Activated CD4-positive, alpha-beta T cell treated with anti-CD3 and anti-CD28 coated beads for 36 hours (primary cell): ENCODE measurements at regions of chr1 and their contacts with region 1.

Region 1: DNA sequence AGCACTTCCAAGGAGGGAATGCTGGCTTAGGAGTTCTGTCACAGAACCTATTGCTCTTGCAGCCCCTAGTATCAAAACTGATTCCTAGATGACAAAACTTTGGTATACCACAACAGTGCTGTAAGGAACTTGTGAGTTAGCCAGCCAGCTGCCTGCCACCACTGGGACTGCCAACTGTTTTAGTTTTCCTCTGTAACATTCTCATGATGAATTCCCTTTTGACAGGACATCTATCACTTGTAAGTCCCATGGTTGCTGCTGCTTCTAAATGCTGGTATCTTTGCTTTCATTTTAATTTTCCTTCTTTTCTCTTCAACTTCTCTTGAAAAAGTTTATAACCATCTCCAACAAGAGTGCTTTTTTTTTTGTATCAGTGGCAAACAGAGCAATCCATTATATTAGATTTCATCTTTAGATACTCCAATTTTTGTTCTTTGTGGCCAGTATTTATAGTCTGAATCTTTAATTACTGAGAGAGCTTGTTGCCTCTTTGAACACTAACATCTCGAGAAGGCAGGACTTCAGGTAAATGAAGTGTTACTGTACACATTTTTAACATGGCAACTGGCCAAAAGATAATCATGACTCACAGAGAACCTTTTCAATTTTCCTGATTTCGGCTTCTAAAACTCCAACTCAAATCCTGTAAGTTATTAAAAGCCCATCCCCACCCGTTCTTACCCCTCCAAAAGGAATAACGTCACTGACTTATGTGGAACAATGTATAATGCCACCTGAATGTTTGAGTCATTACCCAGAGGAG is 19.8 kb downstream of the DBT start:
- DNase-seq: no peak
- ATAC-seq: no peak
- H3K4me3 Mint-ChIP-seq: no peak overlapping the region
- H3K27ac Mint-ChIP-seq: no peak overlapping the region
- H3K4me1 Mint-ChIP-seq: peaks cover 23% of the 10 kb centered on the region
- H3K27me3 Mint-ChIP-seq: no peaks in the 10 kb centered on the region

Region 2: GRCh38 chr1:100308777-100309176 is 78.9 kb after region 1 on chr1:
- CTCF ChIA-PET with region 1: no interaction called
- POLR2A ChIA-PET with region 1: no interaction called
- intact Hi-C with region 1: loop called in 1 of 2 experiments (anchors 2 kb)
- DNase-seq: no peak
- ATAC-seq: peak; percentile 63
- H3K4me3 Mint-ChIP-seq: no peak overlapping the region
- H3K27ac Mint-ChIP-seq: no peak overlapping the region
- H3K4me1 Mint-ChIP-seq: peaks cover 17% of the 10 kb centered on the region
- H3K27me3 Mint-ChIP-seq: no peaks in the 10 kb centered on the region